B cell (primary cell): ENCODE measurements at regions of chr10 and their contacts with region 1.

Region 1: GRCh38 chr10:16843252-16843870 is 26.1 kb upstream of the RSU1 start:
- DNase-seq: peak; percentile 73
- ATAC-seq: peak; percentile 21
- H3K4me3 ChIP-seq: no peak overlapping the region
- H3K4me3 Mint-ChIP-seq: no peak overlapping the region
- H3K27ac ChIP-seq: no peak overlapping the region
- H3K27ac Mint-ChIP-seq: no peak overlapping the region
- H3K4me1 ChIP-seq: no peaks in the 10 kb centered on the region
- H3K4me1 Mint-ChIP-seq: no peaks in the 10 kb centered on the region
- H3K27me3 ChIP-seq: no peaks in the 10 kb centered on the region
- H3K27me3 Mint-ChIP-seq: peaks cover 3% of the 10 kb centered on the region
- CTCF ChIP-seq: peak; percentile 87

Region 2: DNA sequence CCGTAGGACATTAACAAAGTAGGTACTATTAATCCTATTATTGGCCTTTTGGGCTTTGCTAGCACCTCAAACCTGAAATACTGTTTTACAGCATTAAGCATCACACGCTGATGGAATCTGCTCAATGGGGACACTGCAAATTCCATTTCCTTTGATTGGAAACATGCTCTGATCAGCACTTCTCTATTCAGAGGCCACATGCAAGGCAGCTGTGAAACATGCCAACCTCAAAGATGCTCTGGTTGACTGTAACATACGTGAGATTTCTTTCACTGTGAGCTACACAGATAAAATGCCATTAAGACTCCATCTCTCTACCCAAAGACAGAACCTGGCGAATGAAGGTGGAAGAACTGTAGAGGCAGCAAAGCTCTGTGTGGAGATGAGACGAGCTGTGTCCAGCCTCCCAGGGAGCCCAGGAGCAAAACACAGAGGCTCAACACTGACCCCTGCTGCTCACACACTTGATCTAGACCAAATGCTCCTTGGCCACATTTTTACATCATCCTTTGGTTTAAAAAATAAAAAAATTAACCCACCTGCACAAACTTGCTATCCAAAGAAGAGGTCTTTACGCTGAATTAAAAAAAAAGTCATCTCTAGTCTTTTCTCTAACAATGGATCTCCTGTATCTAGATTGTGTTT is 34.2 kb before region 1 on chr10:
- CTCF ChIA-PET with region 1: no interaction called
- POLR2A ChIA-PET with region 1: no interaction called
- intact Hi-C with region 1: no loop called
- DNase-seq: peak; percentile 40
- ATAC-seq: no peak
- H3K4me3 ChIP-seq: no peak overlapping the region
- H3K4me3 Mint-ChIP-seq: no peak overlapping the region
- H3K27ac ChIP-seq: no peak overlapping the region
- H3K27ac Mint-ChIP-seq: no peak overlapping the region
- H3K4me1 ChIP-seq: peaks cover 2 to 5% of the 10 kb centered on the region in 2 donors
- H3K4me1 Mint-ChIP-seq: peaks cover 13% of the 10 kb centered on the region
- H3K27me3 ChIP-seq: no peaks in the 10 kb centered on the region
- H3K27me3 Mint-ChIP-seq: no peaks in the 10 kb centered on the region
- CTCF ChIP-seq: peak; percentile 57

Region 3: DNA sequence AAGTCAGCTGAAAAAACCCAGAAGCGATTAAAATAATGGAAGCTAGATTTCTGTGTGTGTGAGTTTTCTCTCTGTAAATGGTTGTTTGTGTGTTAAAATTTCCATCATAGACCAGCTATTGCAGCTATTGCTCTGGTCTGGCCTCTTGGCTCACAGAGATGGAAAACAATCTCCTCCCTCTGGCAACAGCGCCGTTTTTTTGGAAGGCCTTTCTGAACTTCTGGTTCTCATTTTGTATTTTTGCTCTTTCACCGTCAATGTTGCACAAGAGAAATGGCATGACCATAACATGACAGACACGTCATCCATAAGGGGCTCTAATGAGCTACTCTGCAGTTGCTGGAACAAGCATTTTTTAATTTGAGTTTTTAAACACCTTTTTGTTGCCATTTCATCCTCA is 195.3 kb after region 1 on chr10:
- CTCF ChIA-PET with region 1: no interaction called
- POLR2A ChIA-PET with region 1: no interaction called
- intact Hi-C with region 1: no loop called
- DNase-seq: no peak
- ATAC-seq: no peak
- H3K4me3 ChIP-seq: no peak overlapping the region
- H3K4me3 Mint-ChIP-seq: no peak overlapping the region
- H3K27ac ChIP-seq: no peak overlapping the region
- H3K27ac Mint-ChIP-seq: no peak overlapping the region
- H3K4me1 ChIP-seq: no peaks in the 10 kb centered on the region
- H3K4me1 Mint-ChIP-seq: no peaks in the 10 kb centered on the region
- H3K27me3 ChIP-seq: no peaks in the 10 kb centered on the region
- H3K27me3 Mint-ChIP-seq: no peaks in the 10 kb centered on the region
- CTCF ChIP-seq: no peak

Region 4: GRCh38 chr10:17249820-17250219 is 406.5 kb after region 1 on chr10:
- CTCF ChIA-PET with region 1: interaction called, 72 read pairs
- POLR2A ChIA-PET with region 1: no interaction called
- intact Hi-C with region 1: loop called (anchors 2 kb)
- DNase-seq: peak; percentile 23
- ATAC-seq: peak; percentile 31
- H3K4me3 ChIP-seq: no peak overlapping the region
- H3K4me3 Mint-ChIP-seq: no peak overlapping the region
- H3K27ac ChIP-seq: no peak overlapping the region
- H3K27ac Mint-ChIP-seq: no peak overlapping the region
- H3K4me1 ChIP-seq: no peaks in the 10 kb centered on the region
- H3K4me1 Mint-ChIP-seq: no peaks in the 10 kb centered on the region
- H3K27me3 ChIP-seq: no peaks in the 10 kb centered on the region
- H3K27me3 Mint-ChIP-seq: peaks cover 10% of the 10 kb centered on the region
- CTCF ChIP-seq: peak; percentile 50

Region 5: GRCh38 chr10:17430647-17431355 is 587.4 kb after region 1 on chr10:
- CTCF ChIA-PET with region 1: interaction called, 7 read pairs
- POLR2A ChIA-PET with region 1: no interaction called
- intact Hi-C with region 1: loop called (anchors 1 kb)
- DNase-seq: peak; percentile 60
- ATAC-seq: peak; percentile 47
- H3K4me3 ChIP-seq: no peak overlapping the region
- H3K4me3 Mint-ChIP-seq: peak overlapping the region; percentile 10
- H3K27ac ChIP-seq: no peak overlapping the region
- H3K27ac Mint-ChIP-seq: no peak overlapping the region
- H3K4me1 ChIP-seq: peaks cover 34 to 36% of the 10 kb centered on the region in 2 donors
- H3K4me1 Mint-ChIP-seq: peaks cover 44% of the 10 kb centered on the region
- H3K27me3 ChIP-seq: peaks cover 0 to 18% (median 8%) of the 10 kb centered on the region in 4 experiments
- H3K27me3 Mint-ChIP-seq: peaks cover 34% of the 10 kb centered on the region
- CTCF ChIP-seq: peak; percentile 85